A549 (cell line): ENCODE measurements at regions of chr22 and their contacts with region 1.

Region 1: GRCh38 chr22:36065775-36066559 is 37.3 kb upstream of the RBFOX2 start:
- DNase-seq: peak; percentile 89 to 92
- ATAC-seq: peak; percentile 94 to 96
- H3K4me3 ChIP-seq: peak overlapping the region; percentile 44
- H3K27ac ChIP-seq: peak overlapping the region; percentile 88 to 92
- H3K4me1 ChIP-seq: peaks cover 5% of the 10 kb centered on the region; the same call in 2 of the 3 replicates
- CTCF ChIP-seq: peak; percentile 100
- EP300 ChIP-seq: no peak
- POLR2A ChIP-seq: peak; percentile 62
- RAD21 ChIP-seq: peak; percentile 45 to 86

Region 2: GRCh38 chr22:35329114-35329847 is 736.7 kb before region 1 on chr22:
- CTCF ChIA-PET with region 1: no interaction called
- POLR2A ChIA-PET with region 1: no interaction called
- DNase-seq: no peak
- ATAC-seq: 0 out of 6 replicates have a peak, but pooled peaks of 1 of the 2 experiments have one; percentile 36
- H3K4me3 ChIP-seq: no peak overlapping the region
- H3K27ac ChIP-seq: no peak overlapping the region
- H3K4me1 ChIP-seq: no peaks in the 10 kb centered on the region
- CTCF ChIP-seq: no peak
- EP300 ChIP-seq: no peak
- POLR2A ChIP-seq: no peak
- RAD21 ChIP-seq: no peak

Region 3: DNA sequence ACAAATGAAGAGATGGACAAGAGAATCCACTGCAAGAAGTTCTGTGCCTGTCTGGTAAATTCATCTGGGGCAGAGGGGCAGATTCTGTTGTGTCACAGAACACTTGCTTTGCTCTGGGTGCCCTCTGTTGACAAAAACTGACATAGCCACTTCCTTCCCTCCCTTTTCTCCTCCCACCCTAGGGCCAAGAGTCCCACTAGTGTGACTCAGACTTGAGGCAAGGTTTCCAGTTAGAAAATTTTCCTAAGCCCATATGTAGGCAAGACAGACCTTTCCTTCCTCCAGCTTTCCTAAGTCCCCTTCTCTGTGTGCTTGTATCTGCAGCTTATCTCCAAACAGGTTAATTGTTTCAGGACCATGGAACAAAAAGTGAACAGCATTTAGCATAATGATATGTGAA is 144.2 kb before region 1 on chr22:
- CTCF ChIA-PET with region 1: interaction called, 46 read pairs
- POLR2A ChIA-PET with region 1: no interaction called
- DNase-seq: peak; percentile 31 to 83
- ATAC-seq: peak; percentile 98 to 99
- H3K4me3 ChIP-seq: no peak overlapping the region
- H3K27ac ChIP-seq: peak overlapping the region; percentile 66 to 72; a peak in 5 of 6 replicates
- H3K4me1 ChIP-seq: peaks cover 25% of the 10 kb centered on the region
- CTCF ChIP-seq: peak; percentile 75
- EP300 ChIP-seq: no peak
- POLR2A ChIP-seq: no peak
- RAD21 ChIP-seq: peak; percentile 86 to 87

Region 4: GRCh38 chr22:36010882-36011281 is 55.1 kb before region 1 on chr22:
- CTCF ChIA-PET with region 1: interaction called, 26 read pairs
- POLR2A ChIA-PET with region 1: no interaction called
- DNase-seq: no peak
- ATAC-seq: no peak
- H3K4me3 ChIP-seq: no peak overlapping the region
- H3K27ac ChIP-seq: no peak overlapping the region
- H3K4me1 ChIP-seq: peaks cover 32% of the 10 kb centered on the region
- CTCF ChIP-seq: no peak
- EP300 ChIP-seq: no peak
- POLR2A ChIP-seq: no peak
- RAD21 ChIP-seq: no peak

Region 5: DNA sequence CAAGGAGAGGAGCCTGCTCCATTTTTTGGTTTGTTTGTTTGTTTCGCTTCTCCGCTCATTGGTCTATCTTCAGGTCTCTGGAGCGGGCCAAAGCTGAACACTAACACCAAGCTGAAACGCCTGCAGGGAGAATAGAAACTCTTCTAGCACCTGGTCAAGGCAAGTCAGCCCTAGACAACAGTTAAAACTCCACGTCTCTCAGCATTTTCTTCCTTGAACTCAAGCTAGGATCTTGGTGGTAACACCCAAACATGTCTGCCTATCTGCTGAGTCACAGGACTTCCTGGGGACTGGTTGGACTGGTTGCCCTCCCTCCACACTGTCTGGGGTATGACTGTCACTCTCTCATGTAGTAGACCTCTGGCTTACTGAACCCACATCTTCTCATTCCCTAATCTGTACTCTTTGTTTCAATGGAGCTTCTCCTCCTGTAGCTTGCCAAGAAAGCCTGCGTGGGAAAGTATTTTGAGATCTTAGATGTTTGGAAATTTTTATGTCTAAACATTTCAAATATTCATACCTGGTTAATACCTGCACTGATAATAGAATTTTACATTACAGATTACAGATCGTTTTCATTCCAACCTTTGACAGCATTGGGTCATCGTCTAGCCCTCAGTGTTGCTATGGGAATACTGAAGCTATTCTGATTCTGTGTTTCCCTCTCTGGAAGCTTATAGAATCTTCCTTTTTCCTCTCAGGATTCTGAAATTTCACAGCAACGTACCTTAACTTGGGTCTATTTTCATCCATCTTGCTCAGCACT is 13.3 kb before region 1 on chr22:
- CTCF ChIA-PET with region 1: interaction called, 52 read pairs
- POLR2A ChIA-PET with region 1: interaction called, 5 read pairs
- DNase-seq: peak; percentile 13 to 44
- ATAC-seq: peak in 1 of 2 experiments; percentile 69; a peak in 3 of 6 replicates
- H3K4me3 ChIP-seq: no peak overlapping the region
- H3K27ac ChIP-seq: peak overlapping the region in 1 of 2 experiments; percentile 63; a peak in 3 of 6 replicates
- H3K4me1 ChIP-seq: peaks cover 5% of the 10 kb centered on the region; the same call in 1 of the 3 replicates
- CTCF ChIP-seq: no peak
- EP300 ChIP-seq: no peak
- POLR2A ChIP-seq: no peak
- RAD21 ChIP-seq: no peak

Region 6: DNA sequence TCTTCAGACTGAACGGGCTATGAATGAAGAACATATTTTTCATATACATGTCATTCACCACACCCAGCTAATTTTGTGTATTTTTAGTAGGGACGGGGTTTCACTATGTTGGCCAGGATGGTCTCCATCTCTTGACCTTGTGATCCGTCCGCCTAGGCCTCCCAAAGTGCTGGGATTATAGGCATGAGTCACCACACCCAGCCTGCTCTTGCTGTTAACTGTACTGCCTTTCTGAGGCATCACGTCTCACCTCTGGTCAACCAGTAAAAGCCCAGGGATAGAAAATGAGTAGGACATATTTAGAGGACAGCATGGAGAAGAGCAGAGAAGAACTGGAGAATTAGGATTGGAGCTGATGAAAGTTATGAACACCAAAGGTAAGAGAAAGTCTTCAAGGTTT is 39.0 kb after region 1 on chr22:
- CTCF ChIA-PET with region 1: interaction called, 18 read pairs
- POLR2A ChIA-PET with region 1: no interaction called
- DNase-seq: no peak
- ATAC-seq: no peak
- H3K4me3 ChIP-seq: no peak overlapping the region
- H3K27ac ChIP-seq: no peak overlapping the region
- H3K4me1 ChIP-seq: no peaks in the 10 kb centered on the region
- CTCF ChIP-seq: no peak
- EP300 ChIP-seq: no peak
- POLR2A ChIP-seq: no peak
- RAD21 ChIP-seq: no peak